Transverse colon (tissue), 4 donors: ENCODE measurements at regions of chr10 and their contacts with region 1.

Region 1: DNA sequence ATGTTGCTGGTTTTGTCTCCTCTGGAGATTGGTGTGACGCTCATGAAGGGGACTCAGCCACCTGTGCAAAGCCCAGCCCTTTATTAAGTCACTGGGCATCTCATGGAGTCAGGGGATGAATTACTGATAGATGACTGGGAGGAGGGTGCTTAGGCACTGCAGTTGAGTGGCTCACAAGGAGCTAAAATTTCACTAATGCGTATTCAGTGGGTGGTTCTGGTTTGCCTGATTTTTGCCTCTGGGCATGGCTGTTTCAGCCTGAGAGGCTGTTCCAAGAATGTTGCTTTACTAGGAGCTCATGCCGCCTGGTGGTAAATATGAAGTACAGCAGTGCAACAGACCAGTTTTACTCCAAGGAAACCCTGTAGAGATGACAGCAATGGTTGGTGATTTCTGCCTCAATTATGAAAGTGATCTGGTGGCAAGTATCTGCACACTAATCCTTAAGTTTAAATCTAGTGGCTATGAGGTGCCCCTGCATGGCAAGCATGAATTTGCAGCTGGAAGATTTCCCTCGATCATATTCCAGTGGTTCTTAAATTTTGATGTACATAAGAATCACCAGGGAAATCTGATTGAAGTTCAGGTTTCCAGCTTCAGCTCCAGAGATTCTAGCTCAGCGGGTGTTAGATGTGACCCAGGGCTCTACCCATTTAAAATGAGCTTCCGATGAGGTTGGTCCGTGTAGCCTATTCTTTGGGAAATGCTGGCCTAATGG is 19.9 kb downstream of the ACTA2 start:
- DNase-seq: peak; percentile 38
- H3K4me3 ChIP-seq: no peak overlapping the region
- H3K27ac ChIP-seq: peak overlapping the region; percentile 37 to 74 (median 66)
- H3K4me1 ChIP-seq: peaks cover 7 to 25% (median 11%) of the 10 kb centered on the region in 4 donors
- H3K27me3 ChIP-seq: no peaks in the 10 kb centered on the region
- CTCF ChIP-seq: peak; percentile 85 to 97 (median 86)
- EP300 ChIP-seq: no peak
- POLR2A ChIP-seq: no peak

Region 2: DNA sequence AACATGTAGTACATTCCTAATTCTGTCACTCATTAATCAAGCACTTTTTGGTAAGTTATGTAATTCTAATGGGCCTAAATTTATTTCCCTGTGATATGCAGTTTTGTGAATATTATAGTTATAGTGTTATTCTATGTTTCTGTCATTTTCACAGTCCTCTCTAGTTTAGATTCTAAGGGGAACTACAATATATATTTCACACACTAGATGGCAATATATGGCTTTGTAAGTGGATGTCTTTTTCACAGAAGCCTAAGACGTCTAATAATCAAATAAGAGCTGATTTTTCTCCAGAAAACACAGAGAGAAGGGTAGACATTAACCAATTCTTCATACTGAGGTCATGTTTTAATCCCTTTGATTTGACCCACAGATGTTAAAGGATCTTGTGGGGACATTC is 367.6 kb before region 1 on chr10:
- in situ Hi-C with region 1: loop called in 1 of 4 experiments (anchors 10 kb)
- intact Hi-C with region 1: no loop called
- DNase-seq: no peak
- H3K4me3 ChIP-seq: no peak overlapping the region
- H3K27ac ChIP-seq: no peak overlapping the region
- H3K4me1 ChIP-seq: no peaks in the 10 kb centered on the region
- H3K27me3 ChIP-seq: no peaks in the 10 kb centered on the region
- CTCF ChIP-seq: peak; percentile 16 to 33 (median 22)
- EP300 ChIP-seq: no peak
- POLR2A ChIP-seq: no peak

Region 3: GRCh38 chr10:88908194-88908593 is 24.5 kb before region 1 on chr10:
- in situ Hi-C with region 1: no loop called
- intact Hi-C with region 1: no loop called
- DNase-seq: no peak
- H3K4me3 ChIP-seq: no peak overlapping the region
- H3K27ac ChIP-seq: no peak overlapping the region
- H3K4me1 ChIP-seq: peaks cover 0 to 19% (median 10%) of the 10 kb centered on the region in 4 donors
- H3K27me3 ChIP-seq: no peaks in the 10 kb centered on the region
- CTCF ChIP-seq: no peak
- EP300 ChIP-seq: no peak
- POLR2A ChIP-seq: no peak

Region 4: GRCh38 chr10:88990384-88991160 is 57.9 kb after region 1 on chr10 and contains the start of gene FAS:
- in situ Hi-C with region 1: loop called in 1 of 4 experiments (anchors 10 kb)
- intact Hi-C with region 1: loop called (anchors 2 kb)
- DNase-seq: peak; percentile 86
- H3K4me3 ChIP-seq: peak within 1 kb of the TSS; percentile 54 to 89 (median 70)
- H3K27ac ChIP-seq: peak within 1 kb of the TSS; percentile 91 to 97 (median 96)
- H3K4me1 ChIP-seq: peaks cover 8 to 66% (median 40%) of the 10 kb centered on the region in 4 donors
- H3K27me3 ChIP-seq: no peaks in the 10 kb centered on the region
- CTCF ChIP-seq: peak in 1 of 5 experiments; percentile 1
- EP300 ChIP-seq: no peak
- POLR2A ChIP-seq: peak; percentile 81
- total RNA-seq, gene FAS: 9.0 to 58.5 (median 53.6) TPM

Region 5: GRCh38 chr10:89115876-89116627 is 183.4 kb after region 1 on chr10:
- in situ Hi-C with region 1: no loop called
- intact Hi-C with region 1: no loop called
- DNase-seq: no peak
- H3K4me3 ChIP-seq: no peak overlapping the region
- H3K27ac ChIP-seq: no peak overlapping the region
- H3K4me1 ChIP-seq: no peaks in the 10 kb centered on the region
- H3K27me3 ChIP-seq: no peaks in the 10 kb centered on the region
- CTCF ChIP-seq: no peak
- EP300 ChIP-seq: no peak
- POLR2A ChIP-seq: no peak

Region 6: DNA sequence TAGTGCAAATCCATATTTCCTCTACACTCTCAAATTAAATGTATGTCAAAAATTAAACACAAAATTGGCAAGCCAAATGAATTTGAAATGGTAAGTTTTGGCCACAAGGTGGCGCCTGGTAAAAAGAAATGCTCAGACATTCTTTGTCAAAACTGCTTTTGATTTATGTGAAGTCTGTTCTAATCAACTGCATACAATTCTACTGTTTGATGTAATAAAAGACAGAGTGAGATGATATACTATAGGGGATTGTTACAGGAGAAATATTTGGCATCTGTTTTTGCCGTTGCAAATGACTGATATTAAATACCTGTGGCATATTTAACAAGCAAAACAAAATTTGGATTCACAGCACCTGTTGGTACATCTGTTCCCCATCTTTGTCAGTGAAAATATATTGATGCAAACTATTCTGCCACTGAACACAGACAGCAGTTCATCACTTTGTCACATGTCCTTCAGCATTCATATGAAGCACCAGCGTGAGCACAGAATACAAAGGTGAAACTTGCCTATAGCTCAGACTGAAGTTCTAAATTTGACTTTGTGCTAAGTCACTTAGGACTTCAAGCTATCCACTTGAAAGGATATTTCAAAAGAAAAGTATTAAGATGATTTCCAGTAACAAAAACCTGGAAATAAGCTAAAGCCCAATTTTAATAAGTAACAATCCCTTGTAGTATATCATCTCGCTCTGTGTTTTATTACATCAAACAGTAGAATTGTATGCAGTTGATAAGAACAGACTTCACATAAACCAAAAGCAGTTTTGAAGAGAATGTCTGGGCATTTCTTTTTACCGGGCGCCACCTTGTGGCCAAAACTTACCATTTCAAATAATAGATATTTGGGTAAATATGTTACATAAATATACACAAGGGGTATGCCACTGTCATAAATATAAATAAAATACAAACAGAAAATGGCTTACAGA is 284.6 kb after region 1 on chr10:
- in situ Hi-C with region 1: loop called in 2 of 4 experiments (anchors 5 to 10 kb)
- intact Hi-C with region 1: no loop called
- DNase-seq: peak; percentile 55
- H3K4me3 ChIP-seq: no peak overlapping the region
- H3K27ac ChIP-seq: peak overlapping the region; percentile 39 to 59 (median 43)
- H3K4me1 ChIP-seq: peaks cover 0 to 13% (median 8%) of the 10 kb centered on the region in 4 donors
- H3K27me3 ChIP-seq: no peaks in the 10 kb centered on the region
- CTCF ChIP-seq: peak; percentile 72 to 83 (median 79)
- EP300 ChIP-seq: no peak
- POLR2A ChIP-seq: no peak